Activated CD4-positive, alpha-beta T cell treated with anti-CD3 and anti-CD28 coated beads, Interleukin-2, amount 10 ng/mL, durations not matched to agents 7 days and 5 days (primary cell): ENCODE measurements at regions of chr17 and their contacts with region 1.

Region 1: GRCh38 chr17:46144246-46144645 is 49.0 kb downstream of the KANSL1 start:
- DNase-seq: no peak
- H3K4me3 Mint-ChIP-seq: no peak overlapping the region
- H3K27ac Mint-ChIP-seq: no peak overlapping the region
- H3K4me1 Mint-ChIP-seq: peaks cover 83% of the 10 kb centered on the region
- H3K27me3 Mint-ChIP-seq: no peaks in the 10 kb centered on the region

Region 2: DNA sequence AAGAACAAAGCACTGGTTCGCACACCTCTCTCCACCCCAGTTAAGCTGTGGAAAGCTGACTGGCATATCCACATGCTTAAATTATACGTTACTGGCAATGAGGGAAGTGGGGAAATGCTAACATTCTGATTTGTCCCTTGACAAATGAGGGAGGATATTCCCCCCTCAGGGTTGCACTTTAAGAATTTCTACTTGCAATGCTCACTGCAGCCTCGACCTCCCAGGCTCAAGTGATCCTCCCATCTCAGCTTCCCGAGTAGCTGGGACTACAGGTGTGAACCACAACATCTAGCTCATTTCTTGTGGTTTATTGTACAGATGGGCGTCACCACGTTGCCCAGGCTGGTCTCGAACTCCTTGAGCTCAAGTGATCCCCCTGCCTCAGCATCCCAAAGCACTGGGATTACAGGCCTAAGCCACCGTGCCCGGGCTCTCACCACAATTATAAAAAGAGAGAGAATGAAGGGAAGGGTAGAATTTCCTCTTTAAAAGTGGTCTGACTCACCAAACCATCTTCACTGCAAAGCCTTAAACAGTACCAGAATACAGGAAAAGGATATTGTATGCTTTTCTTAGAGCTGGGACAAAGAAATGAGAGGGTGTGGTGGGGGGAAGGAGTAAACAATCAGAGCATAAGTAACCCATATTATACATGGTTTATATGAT is 10.0 kb after region 1 on chr17:
- CTCF ChIA-PET with region 1: interaction called, 11 read pairs
- POLR2A ChIA-PET with region 1: no interaction called
- DNase-seq: peak; percentile 17
- H3K4me3 Mint-ChIP-seq: peak overlapping the region; percentile 31
- H3K27ac Mint-ChIP-seq: peak overlapping the region; percentile 74
- H3K4me1 Mint-ChIP-seq: peaks cover 75% of the 10 kb centered on the region
- H3K27me3 Mint-ChIP-seq: no peaks in the 10 kb centered on the region